Mucosa of descending colon (tissue), 3 donors: ENCODE measurements at regions of chr2 and their contacts with region 1.

Region 1: GRCh38 chr2:167602122-167602521 is 645.3 kb downstream of the STK39 start:
- DNase-seq: no peak
- ATAC-seq: no peak
- H3K4me3 ChIP-seq: no peak overlapping the region
- H3K4me1 ChIP-seq: no peaks in the 10 kb centered on the region
- CTCF ChIP-seq: no peak

Region 2: DNA sequence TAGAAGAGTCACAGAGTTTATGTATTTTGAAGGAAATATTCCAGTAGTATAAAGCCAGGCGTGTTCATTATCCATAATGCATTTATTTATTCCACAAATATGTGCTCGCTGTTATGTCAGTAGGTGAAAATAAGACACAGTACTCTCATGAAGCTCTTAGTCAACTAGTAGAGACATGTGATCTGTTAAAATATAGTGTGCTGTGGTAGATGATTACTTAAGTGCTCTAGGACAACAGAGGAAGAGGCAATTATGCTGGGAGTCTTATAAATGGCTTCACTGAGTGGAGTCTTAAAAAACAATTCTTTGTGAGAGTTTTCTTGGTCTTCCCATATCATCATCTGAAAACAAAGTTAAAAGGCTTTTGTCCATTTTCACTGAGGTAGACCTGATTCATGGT is 256.6 kb before region 1 on chr2:
- intact Hi-C with region 1: loop called in 1 of 2 experiments (anchors 5 kb)
- DNase-seq: no peak
- ATAC-seq: peak; percentile 63
- H3K4me3 ChIP-seq: no peak overlapping the region
- H3K4me1 ChIP-seq: no peaks in the 10 kb centered on the region
- CTCF ChIP-seq: no peak